Dendritic cell treated with granulocyte-macrophage colony-stimulating factor and Interleukin-4, amounts not matched to agents 40 ng/mL and 50 ng/mL, for 4 days (primary cell): ENCODE measurements at regions of chr12 and their contacts with region 1.

Region 1: DNA sequence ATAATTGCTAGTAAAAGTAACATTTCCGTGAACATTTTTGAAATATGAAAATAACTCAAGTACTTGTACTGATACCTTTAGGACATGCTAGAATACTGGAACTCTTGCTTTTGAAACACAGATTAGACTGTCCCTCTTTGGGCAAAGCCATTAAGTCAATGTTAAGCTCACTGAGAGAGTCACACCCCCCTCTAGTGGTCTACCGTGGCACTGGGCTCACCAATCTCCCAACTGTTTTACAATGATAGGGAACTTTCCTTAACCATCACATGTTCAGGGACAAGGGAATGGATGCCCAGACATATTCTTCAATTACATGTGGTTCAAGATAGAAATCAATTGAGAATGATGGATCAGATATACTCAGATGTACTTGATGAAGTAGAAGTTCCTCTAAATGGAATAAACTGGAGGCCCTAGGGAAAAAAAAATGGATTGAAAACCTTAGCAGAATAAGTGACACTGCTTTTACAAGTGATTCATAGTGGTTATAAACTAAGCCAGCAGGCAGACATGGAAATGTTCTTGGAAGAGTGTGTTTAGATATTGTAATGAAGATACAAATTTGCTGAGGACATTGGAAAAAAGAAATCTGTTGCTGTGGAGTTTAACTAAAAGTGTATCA is 17.8 kb downstream of the NANOG start:
- H3K4me3 Mint-ChIP-seq: no peak overlapping the region
- H3K27ac Mint-ChIP-seq: no peak overlapping the region
- H3K4me1 Mint-ChIP-seq: peaks cover 6% of the 10 kb centered on the region
- H3K27me3 Mint-ChIP-seq: no peaks in the 10 kb centered on the region

Region 2: DNA sequence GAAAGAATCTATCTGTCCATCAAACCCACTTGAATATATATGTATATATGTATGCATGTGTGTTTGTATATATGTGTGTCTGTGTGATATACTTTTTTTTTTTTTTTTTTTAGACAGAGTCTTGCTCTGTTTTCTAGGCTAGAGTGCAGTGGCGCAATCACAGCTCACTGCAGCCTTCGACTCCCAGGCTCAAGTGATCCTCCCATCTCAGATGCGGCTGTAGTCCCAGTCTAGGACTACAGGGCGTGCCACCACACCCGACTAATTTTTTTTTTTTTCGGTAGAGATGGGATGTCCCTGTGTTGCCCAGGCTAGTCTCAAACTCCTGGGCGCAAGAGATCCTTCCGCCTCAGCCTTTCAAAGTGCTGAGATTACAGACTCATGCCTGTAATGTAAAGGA is 128.2 kb before region 1 on chr12:
- intact Hi-C with region 1: loop called (anchors 1 kb)
- H3K4me3 Mint-ChIP-seq: no peak overlapping the region
- H3K27ac Mint-ChIP-seq: no peak overlapping the region
- H3K4me1 Mint-ChIP-seq: peaks cover 17% of the 10 kb centered on the region
- H3K27me3 Mint-ChIP-seq: no peaks in the 10 kb centered on the region

Region 3: DNA sequence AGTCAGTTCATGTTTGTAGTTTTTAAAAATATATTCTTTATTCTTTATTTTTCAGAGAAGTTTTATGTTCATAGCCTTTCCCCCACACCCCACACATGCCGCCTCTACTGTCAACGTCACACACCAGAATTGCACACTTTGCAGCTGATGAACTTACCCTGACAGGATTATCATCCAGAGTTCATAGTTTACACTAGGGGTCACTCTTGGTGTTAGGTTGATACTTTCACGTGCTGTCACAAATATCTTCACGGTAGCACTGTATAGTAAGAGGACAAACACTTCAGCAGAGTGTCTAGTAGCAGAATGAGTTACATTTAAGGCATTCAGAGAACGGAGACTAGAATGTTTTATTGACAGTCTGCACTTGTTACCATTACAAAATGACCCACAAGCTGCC is 90.6 kb before region 1 on chr12:
- intact Hi-C with region 1: loop called (anchors 2 kb)
- H3K4me3 Mint-ChIP-seq: no peak overlapping the region
- H3K27ac Mint-ChIP-seq: no peak overlapping the region
- H3K4me1 Mint-ChIP-seq: peaks cover 18% of the 10 kb centered on the region
- H3K27me3 Mint-ChIP-seq: no peaks in the 10 kb centered on the region